ENCODE measurements at regions of chr11 and their contacts with region 1.

Region 1: DNA sequence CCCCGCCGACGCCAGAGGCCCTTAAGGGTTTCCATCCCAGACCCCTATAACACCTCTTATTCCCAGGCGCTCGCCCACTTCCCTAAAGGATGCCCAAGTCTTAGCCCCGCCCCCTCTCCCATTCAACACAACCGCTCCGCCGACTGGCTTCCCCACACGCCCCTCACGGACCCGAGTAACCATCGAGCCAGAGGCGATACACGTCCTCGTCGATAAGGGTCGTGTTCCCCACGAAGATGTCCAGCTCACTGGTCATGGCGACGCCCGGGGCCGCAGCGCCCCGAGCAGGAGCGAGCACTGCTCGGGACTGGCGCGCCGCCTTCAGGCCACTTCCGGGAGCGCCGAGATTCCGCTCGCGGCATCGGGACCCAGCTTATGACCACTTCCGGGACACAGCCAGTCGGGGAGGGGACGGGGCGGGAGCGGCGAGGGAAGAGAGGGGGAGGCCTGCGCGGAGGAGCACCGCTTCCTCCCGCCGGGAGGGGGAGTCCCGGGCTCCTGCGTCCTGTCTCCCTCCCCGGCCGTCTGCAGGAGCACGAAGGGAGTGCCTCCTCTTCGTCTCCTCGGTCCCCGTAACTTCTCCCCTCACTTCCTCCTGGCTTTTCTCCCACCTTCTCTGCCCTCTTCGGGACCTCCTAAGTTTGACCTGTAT is at the start of gene FIBP:
- DNase-seq: peak; percentile 98
- ATAC-seq: peak; percentile 14
- H3K4me3 ChIP-seq: peak within 1 kb of the TSS; percentile 72
- H3K27ac ChIP-seq: peak within 1 kb of the TSS; percentile 56
- H3K4me1 ChIP-seq: peaks cover 31% of the 10 kb centered on the region
- H3K27me3 ChIP-seq: no peaks in the 10 kb centered on the region
- CTCF ChIP-seq: peak; percentile 87
- total RNA-seq, gene FIBP: 221 TPM in 2 replicates

Region 2: DNA sequence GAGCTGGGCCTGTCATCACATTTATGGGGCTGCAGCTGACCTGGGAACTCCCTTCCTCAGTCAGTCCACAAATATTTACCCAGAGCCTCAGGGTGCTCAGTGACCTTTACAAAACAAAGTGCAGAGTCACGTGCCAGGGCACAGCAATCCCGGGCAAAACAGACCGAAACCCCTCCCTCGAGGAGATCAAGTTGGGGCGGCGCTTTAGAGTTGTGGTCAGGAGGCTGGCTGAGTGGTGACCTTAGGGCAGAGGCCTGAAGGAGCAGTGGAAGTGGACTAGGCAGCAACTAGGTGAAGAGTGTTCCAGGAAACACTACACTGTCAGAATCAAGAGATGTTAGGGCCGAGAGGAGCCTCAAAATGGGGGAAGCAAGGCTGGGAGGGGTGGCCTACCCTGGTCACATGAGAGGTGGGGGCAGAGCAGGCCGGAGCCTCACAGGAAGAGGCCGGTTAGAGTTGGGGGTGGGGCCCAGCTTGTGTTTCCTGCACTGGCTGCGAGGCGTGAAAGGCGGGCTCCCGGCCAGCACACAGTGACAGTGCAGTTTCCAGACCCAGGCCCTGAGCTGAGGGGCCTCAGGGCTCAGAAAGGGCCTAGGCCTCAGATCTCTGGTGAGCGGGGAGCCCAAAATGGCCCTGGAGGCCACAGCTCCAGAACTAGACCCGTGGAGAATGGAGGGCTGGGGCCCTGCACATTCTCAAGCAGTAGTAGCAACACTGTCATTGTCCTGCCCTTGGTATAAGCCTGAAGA is 469.4 kb before region 1 on chr11:
- CTCF ChIA-PET with region 1: no interaction called
- POLR2A ChIA-PET with region 1: interaction called, 14 read pairs
- intact Hi-C with region 1: no loop called
- DNase-seq: peak; percentile 98
- ATAC-seq: peak; percentile 25
- H3K4me3 ChIP-seq: peak overlapping the region; percentile 41
- H3K27ac ChIP-seq: peak overlapping the region; percentile 99
- H3K4me1 ChIP-seq: peaks cover 53% of the 10 kb centered on the region
- H3K27me3 ChIP-seq: no peaks in the 10 kb centered on the region
- CTCF ChIP-seq: no peak

Region 3: GRCh38 chr11:65859200-65859811 is 29.0 kb before region 1 on chr11:
- CTCF ChIA-PET with region 1: interaction called, 26 read pairs
- POLR2A ChIA-PET with region 1: interaction called, 23 read pairs
- intact Hi-C with region 1: loop called (anchors 2 kb)
- DNase-seq: peak; percentile 99
- ATAC-seq: peak; percentile 63
- H3K4me3 ChIP-seq: peak overlapping the region; percentile 79
- H3K27ac ChIP-seq: peak overlapping the region; percentile 74
- H3K4me1 ChIP-seq: peaks cover 41% of the 10 kb centered on the region
- H3K27me3 ChIP-seq: no peaks in the 10 kb centered on the region
- CTCF ChIP-seq: no peak

Region 4: DNA sequence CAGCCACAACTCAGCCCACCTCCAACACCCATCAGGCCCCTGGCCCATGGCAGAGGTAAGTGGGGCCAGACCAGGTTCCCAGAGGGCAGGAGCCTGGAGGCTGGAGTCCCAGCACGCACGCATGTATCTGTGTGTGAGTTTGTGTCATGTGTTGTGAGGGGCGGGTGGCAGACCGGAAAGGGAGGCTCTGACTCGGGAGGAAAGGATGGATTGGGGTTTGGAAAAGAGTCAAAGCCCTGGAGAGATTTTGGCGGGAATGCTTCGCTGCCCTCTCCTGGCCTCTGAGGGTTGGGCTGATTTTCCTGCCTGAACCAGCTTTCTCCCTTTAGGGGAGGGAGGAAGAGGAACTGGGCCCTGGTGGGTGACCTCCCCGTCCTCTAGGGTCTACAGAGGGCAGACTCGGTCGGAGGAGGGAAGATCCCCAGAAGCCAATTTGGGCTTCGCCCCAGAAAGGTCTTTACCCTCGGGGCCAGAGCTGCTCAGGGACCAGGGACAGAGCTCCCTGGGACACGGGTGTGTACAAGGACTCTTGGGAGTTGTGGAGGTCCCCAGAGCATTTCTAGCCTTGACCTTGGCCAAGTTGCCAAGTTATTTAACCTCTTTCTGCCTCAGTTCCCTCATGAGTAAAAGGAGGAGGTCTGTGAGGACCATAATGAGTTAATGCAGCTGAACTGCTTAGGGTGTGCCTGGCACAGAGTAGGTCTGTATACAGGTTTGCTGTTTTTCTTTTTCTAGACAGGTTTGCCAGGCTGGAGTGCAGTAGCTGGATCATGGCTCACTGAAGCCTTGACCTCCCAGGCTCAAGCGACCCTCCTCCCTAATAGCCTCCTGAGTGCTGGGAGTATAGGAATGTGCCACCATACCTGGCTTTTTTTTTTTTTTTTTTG is 23.6 kb after region 1 on chr11:
- CTCF ChIA-PET with region 1: interaction called, 16 read pairs
- POLR2A ChIA-PET with region 1: interaction called, 35 read pairs
- intact Hi-C with region 1: loop called (anchors 2 kb)
- DNase-seq: peak; percentile 99
- ATAC-seq: peak; percentile 46
- H3K4me3 ChIP-seq: no peak overlapping the region
- H3K27ac ChIP-seq: peak overlapping the region; percentile 93
- H3K4me1 ChIP-seq: peaks cover 82% of the 10 kb centered on the region
- H3K27me3 ChIP-seq: no peaks in the 10 kb centered on the region
- CTCF ChIP-seq: peak; percentile 66

Region 5: GRCh38 chr11:65927904-65928397 is 39.7 kb after region 1 on chr11:
- CTCF ChIA-PET with region 1: interaction called, 14 read pairs
- POLR2A ChIA-PET with region 1: interaction called, 4 read pairs
- intact Hi-C with region 1: no loop called
- DNase-seq: no peak
- ATAC-seq: no peak; the same call in 1 of the 2 replicates
- H3K4me3 ChIP-seq: no peak overlapping the region
- H3K27ac ChIP-seq: no peak overlapping the region
- H3K4me1 ChIP-seq: no peaks in the 10 kb centered on the region
- H3K27me3 ChIP-seq: no peaks in the 10 kb centered on the region
- CTCF ChIP-seq: no peak

Region 6: DNA sequence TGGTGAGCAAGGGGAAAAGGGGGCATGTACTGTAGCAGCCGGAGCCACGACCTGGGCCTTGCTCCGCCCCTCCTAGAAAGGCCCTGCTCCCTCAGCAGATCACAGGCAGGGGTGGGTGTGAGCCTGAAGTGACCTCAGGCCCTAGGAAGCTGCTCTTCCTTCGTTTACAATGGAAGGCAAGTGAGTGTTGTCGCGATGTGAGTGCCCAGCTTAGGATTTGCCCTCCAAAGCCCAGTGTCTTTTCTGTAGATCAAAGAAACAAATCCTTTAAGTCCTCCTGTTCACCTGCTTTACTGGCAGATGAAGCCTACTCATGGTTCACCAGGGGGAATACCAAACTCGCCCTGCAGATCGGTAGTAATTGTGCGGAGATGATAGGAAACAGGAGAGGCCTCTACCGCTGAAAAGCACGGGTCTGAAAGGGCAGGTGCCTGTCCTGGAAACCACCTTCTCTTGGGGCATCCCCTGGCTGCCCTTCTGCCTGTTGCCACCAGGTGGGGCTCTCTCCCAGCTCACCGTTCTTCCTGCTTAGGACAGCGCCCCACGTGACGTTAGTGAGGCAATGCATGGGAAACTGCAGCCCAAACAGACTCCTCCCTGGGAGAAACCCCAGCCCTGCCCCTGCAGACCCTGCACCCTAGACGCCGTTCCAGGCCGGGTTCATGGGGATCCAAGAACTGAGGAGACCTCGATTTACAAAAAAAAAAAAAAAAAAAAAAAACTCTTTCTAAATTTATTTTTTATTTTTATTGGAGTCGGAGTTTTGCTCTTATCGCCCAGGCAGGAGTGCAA is 334.3 kb after region 1 on chr11:
- CTCF ChIA-PET with region 1: interaction called, 13 read pairs
- POLR2A ChIA-PET with region 1: no interaction called
- intact Hi-C with region 1: no loop called
- DNase-seq: peak; percentile 96
- ATAC-seq: peak; percentile 91
- H3K4me3 ChIP-seq: no peak overlapping the region
- H3K27ac ChIP-seq: no peak overlapping the region
- H3K4me1 ChIP-seq: peaks cover 7% of the 10 kb centered on the region
- H3K27me3 ChIP-seq: no peaks in the 10 kb centered on the region
- CTCF ChIP-seq: peak; percentile 99

Measured in PC-3 (cell line).